SK-N-SH (cell line): ENCODE measurements at regions of chr17 and their contacts with region 1.

Region 1: DNA sequence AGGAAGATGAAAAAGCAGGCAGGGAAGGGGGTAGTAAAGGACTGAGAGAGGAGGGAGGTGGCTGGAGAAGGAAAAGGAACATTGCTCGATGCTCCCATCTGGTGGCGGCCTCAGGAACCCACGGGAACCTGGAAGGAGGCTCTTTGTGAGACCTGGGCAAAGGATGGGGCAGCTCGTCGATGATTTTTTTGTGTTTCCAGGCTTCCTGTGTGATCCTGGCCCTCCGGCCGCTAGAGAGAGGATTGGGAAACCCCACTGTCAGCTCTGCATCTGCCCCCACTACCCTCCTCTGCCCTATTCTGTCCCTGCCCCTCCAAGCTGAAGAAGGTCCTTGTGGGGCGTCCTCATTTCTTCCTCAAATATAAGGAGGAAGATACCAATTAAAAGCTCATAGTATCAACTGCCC is 6.6 kb downstream of the WFIKKN2 start:
- DNase-seq: peak; percentile 97
- H3K4me3 ChIP-seq: no peak overlapping the region; a peak in 1 of 4 replicates
- H3K27ac ChIP-seq: no peak overlapping the region
- H3K4me1 ChIP-seq: peaks cover 3 to 5% of the 10 kb centered on the region in 2 experiments; a peak in 2 of 4 replicates
- H3K27me3 ChIP-seq: no peaks in the 10 kb centered on the region
- CTCF ChIP-seq: peak; percentile 94
- EP300 ChIP-seq: no peak
- RAD21 ChIP-seq: peak; percentile 93

Region 2: GRCh38 chr17:50697663-50698274 is 144.2 kb before region 1 on chr17:
- CTCF ChIA-PET with region 1: interaction called, 16 read pairs
- POLR2A ChIA-PET with region 1: no interaction called
- DNase-seq: no peak
- H3K4me3 ChIP-seq: no peak overlapping the region
- H3K27ac ChIP-seq: no peak overlapping the region
- H3K4me1 ChIP-seq: peaks cover 10 to 25% of the 10 kb centered on the region in 2 experiments
- H3K27me3 ChIP-seq: no peaks in the 10 kb centered on the region
- CTCF ChIP-seq: no peak; the same call in 1 of the 2 replicates
- EP300 ChIP-seq: no peak
- RAD21 ChIP-seq: peak; percentile 31

Region 3: GRCh38 chr17:50798424-50799288 is 43.3 kb before region 1 on chr17:
- CTCF ChIA-PET with region 1: interaction called, 45 read pairs
- POLR2A ChIA-PET with region 1: no interaction called
- DNase-seq: no peak
- H3K4me3 ChIP-seq: no peak overlapping the region
- H3K27ac ChIP-seq: no peak overlapping the region
- H3K4me1 ChIP-seq: peaks cover 0 to 7% of the 10 kb centered on the region in 2 experiments; a peak in 1 of 4 replicates
- H3K27me3 ChIP-seq: no peaks in the 10 kb centered on the region
- CTCF ChIP-seq: no peak
- EP300 ChIP-seq: no peak
- RAD21 ChIP-seq: no peak

Region 4: GRCh38 chr17:50816771-50817751 is 24.9 kb before region 1 on chr17:
- CTCF ChIA-PET with region 1: interaction called, 25 read pairs
- POLR2A ChIA-PET with region 1: no interaction called
- DNase-seq: peak; percentile 84
- H3K4me3 ChIP-seq: no peak overlapping the region; a peak in 1 of 4 replicates
- H3K27ac ChIP-seq: no peak overlapping the region
- H3K4me1 ChIP-seq: no peaks in the 10 kb centered on the region; a peak in 1 of 4 replicates
- H3K27me3 ChIP-seq: peaks cover 4% of the 10 kb centered on the region; the same call in 1 of the 2 replicates
- CTCF ChIP-seq: peak; percentile 82
- EP300 ChIP-seq: no peak
- RAD21 ChIP-seq: peak; percentile 44

Region 5: GRCh38 chr17:50949989-50950881 is 108.3 kb after region 1 on chr17:
- CTCF ChIA-PET with region 1: interaction called, 820 read pairs
- POLR2A ChIA-PET with region 1: interaction called, 3 read pairs
- DNase-seq: peak; percentile 86
- H3K4me3 ChIP-seq: peak overlapping the region in 1 of 2 experiments; percentile 15; a peak in 1 of 4 replicates
- H3K27ac ChIP-seq: peak overlapping the region; percentile 81 to 82
- H3K4me1 ChIP-seq: peaks cover 43 to 81% of the 10 kb centered on the region in 2 experiments
- H3K27me3 ChIP-seq: no peaks in the 10 kb centered on the region
- CTCF ChIP-seq: peak; percentile 95
- EP300 ChIP-seq: peak in 1 of 2 experiments; percentile 33; a peak in 1 of 4 replicates
- RAD21 ChIP-seq: peak; percentile 95